Calu3 (cell line): ENCODE measurements at regions of chr11 and their contacts with region 1.

Region 1: GRCh38 chr11:65274735-65275682 is 13.2 kb downstream of the POLA2 start:
- DNase-seq: peak; percentile 86
- H3K4me3 Mint-ChIP-seq: peak overlapping the region; percentile 14
- H3K27ac Mint-ChIP-seq: peak overlapping the region; percentile 76
- H3K4me1 Mint-ChIP-seq: peaks cover 48% of the 10 kb centered on the region
- H3K27me3 Mint-ChIP-seq: no peaks in the 10 kb centered on the region
- CTCF ChIP-seq: peak; percentile 79

Region 2: DNA sequence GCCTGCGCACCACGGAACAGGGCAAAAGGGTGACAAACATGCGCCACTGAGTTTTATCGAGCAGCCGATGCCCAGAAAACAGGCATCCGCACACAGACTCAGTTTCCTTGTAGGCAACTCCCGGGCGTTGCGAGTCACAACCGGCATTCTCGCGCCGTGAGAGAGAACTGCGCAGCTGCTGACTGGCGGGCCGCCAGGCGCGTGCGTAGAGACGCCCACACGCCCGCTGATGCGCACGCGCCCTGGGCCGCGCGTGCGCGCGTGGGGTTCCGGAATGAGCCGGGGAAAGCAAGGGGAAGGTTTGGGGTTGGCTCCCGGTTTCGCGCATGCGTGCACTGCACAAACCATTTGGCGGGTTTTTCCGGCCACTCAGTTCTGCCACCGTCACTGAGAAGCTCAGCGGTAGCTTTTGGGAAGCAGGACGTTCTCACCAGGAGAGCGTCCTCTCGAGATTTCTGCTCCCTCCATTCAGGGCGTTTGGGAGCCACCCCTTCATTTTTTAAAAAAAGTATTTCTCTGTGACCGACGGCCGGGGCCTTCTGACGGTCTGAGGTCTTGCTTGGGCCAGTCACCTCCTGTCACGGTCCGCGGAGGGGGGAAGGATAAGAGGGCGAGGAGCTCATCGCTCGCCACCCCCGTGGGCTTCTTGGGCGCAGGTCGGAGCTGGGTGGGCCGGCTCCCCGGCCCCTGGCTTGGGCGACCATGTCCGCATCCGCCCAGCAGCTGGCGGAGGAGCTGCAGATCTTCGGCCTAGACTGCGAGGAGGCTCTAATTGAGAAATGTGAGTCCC is 13.2 kb before region 1 on chr11 and contains the start of gene POLA2:
- CTCF ChIA-PET with region 1: interaction called, 12 read pairs
- intact Hi-C with region 1: no loop called
- DNase-seq: peak; percentile 95
- H3K4me3 Mint-ChIP-seq: peak within 1 kb of the TSS; percentile 72
- H3K27ac Mint-ChIP-seq: peak within 1 kb of the TSS; percentile 5
- H3K4me1 Mint-ChIP-seq: peaks cover 29% of the 10 kb centered on the region
- H3K27me3 Mint-ChIP-seq: no peaks in the 10 kb centered on the region
- CTCF ChIP-seq: no peak
- total RNA-seq, gene POLA2: 34.4 and 40.4 TPM in 2 replicates

Region 3: GRCh38 chr11:65301491-65302329 is 26.7 kb after region 1 on chr11:
- CTCF ChIA-PET with region 1: no interaction called
- intact Hi-C with region 1: no loop called
- DNase-seq: no peak
- H3K4me3 Mint-ChIP-seq: no peak overlapping the region
- H3K27ac Mint-ChIP-seq: no peak overlapping the region
- H3K4me1 Mint-ChIP-seq: no peaks in the 10 kb centered on the region
- H3K27me3 Mint-ChIP-seq: no peaks in the 10 kb centered on the region
- CTCF ChIP-seq: no peak

Region 4: GRCh38 chr11:65314501-65315203 is 39.6 kb after region 1 on chr11 and contains the start of gene CDC42EP2:
- CTCF ChIA-PET with region 1: interaction called, 113 read pairs
- intact Hi-C with region 1: loop called (anchors 1 kb)
- DNase-seq: peak; percentile 89
- H3K4me3 Mint-ChIP-seq: peak within 1 kb of the TSS; percentile 96
- H3K27ac Mint-ChIP-seq: peak within 1 kb of the TSS; percentile 89
- H3K4me1 Mint-ChIP-seq: peaks cover 43% of the 10 kb centered on the region
- H3K27me3 Mint-ChIP-seq: no peaks in the 10 kb centered on the region
- CTCF ChIP-seq: no peak
- total RNA-seq, gene CDC42EP2: 35.6 and 43.2 TPM in 2 replicates

Region 5: DNA sequence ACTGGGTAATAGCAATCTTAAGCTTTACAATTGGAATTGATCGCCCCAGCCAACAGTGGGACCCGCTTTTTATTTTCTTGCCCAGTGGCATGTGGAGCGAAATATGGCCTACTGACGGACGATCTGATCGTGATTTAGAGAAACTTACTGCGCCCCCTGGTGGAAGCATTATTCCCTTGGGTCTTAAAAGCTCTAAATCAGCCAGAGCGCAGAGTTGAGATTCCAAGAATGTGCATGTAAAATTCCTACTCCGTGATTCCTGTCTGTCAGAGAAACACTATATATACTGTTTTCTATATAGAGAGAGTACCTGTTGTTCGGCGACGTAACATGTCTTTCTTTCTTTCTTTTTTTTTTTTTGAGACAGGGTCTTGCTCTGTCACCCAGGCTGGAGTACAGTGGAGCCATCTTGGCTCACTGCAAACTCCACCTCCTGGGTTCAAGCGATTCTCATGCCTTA is 55.0 kb after region 1 on chr11:
- CTCF ChIA-PET with region 1: interaction called, 61 read pairs
- intact Hi-C with region 1: loop called (anchors 1 kb)
- DNase-seq: peak; percentile 87
- H3K4me3 Mint-ChIP-seq: no peak overlapping the region
- H3K27ac Mint-ChIP-seq: peak overlapping the region; percentile 83
- H3K4me1 Mint-ChIP-seq: peaks cover 13% of the 10 kb centered on the region
- H3K27me3 Mint-ChIP-seq: no peaks in the 10 kb centered on the region
- CTCF ChIP-seq: peak; percentile 69

Region 6: GRCh38 chr11:65352783-65353182 is 77.8 kb after region 1 on chr11:
- CTCF ChIA-PET with region 1: interaction called, 11 read pairs
- intact Hi-C with region 1: loop called (anchors 1 kb)
- DNase-seq: no peak
- H3K4me3 Mint-ChIP-seq: no peak overlapping the region
- H3K27ac Mint-ChIP-seq: no peak overlapping the region
- H3K4me1 Mint-ChIP-seq: peaks cover 12% of the 10 kb centered on the region
- H3K27me3 Mint-ChIP-seq: peaks cover 9% of the 10 kb centered on the region
- CTCF ChIP-seq: no peak